Endothelial cell of umbilical vein (primary cell): ENCODE measurements at regions of chr4 and their contacts with region 1.

Region 1: GRCh38 chr4:53196882-53197771 is 168.7 kb downstream of the SCFD2 start:
- DNase-seq: peak; percentile 84
- H3K4me3 ChIP-seq: no peak overlapping the region
- H3K27ac ChIP-seq: no peak overlapping the region
- H3K4me1 ChIP-seq: no peaks in the 10 kb centered on the region
- H3K27me3 ChIP-seq: no peaks in the 10 kb centered on the region
- CTCF ChIP-seq: peak; percentile 46 to 49
- POLR2A ChIP-seq: no peak

Region 2: GRCh38 chr4:53101191-53101581 is 95.9 kb before region 1 on chr4:
- CTCF ChIA-PET with region 1: no interaction called
- POLR2A ChIA-PET with region 1: no interaction called
- dilution Hi-C with region 1: no loop called
- intact Hi-C with region 1: loop called (anchors 1 kb)
- DNase-seq: peak; percentile 90
- H3K4me3 ChIP-seq: peak overlapping the region in 1 of 3 experiments; percentile 39
- H3K27ac ChIP-seq: peak overlapping the region; percentile 98
- H3K4me1 ChIP-seq: peaks cover 58% of the 10 kb centered on the region
- H3K27me3 ChIP-seq: no peaks in the 10 kb centered on the region
- CTCF ChIP-seq: no peak
- POLR2A ChIP-seq: no peak

Region 3: GRCh38 chr4:53169695-53170617 is 27.2 kb before region 1 on chr4:
- CTCF ChIA-PET with region 1: no interaction called
- POLR2A ChIA-PET with region 1: no interaction called
- dilution Hi-C with region 1: no loop called
- intact Hi-C with region 1: no loop called
- DNase-seq: no peak
- H3K4me3 ChIP-seq: no peak overlapping the region
- H3K27ac ChIP-seq: no peak overlapping the region
- H3K4me1 ChIP-seq: no peaks in the 10 kb centered on the region
- H3K27me3 ChIP-seq: no peaks in the 10 kb centered on the region
- CTCF ChIP-seq: no peak
- POLR2A ChIP-seq: no peak

Region 4: DNA sequence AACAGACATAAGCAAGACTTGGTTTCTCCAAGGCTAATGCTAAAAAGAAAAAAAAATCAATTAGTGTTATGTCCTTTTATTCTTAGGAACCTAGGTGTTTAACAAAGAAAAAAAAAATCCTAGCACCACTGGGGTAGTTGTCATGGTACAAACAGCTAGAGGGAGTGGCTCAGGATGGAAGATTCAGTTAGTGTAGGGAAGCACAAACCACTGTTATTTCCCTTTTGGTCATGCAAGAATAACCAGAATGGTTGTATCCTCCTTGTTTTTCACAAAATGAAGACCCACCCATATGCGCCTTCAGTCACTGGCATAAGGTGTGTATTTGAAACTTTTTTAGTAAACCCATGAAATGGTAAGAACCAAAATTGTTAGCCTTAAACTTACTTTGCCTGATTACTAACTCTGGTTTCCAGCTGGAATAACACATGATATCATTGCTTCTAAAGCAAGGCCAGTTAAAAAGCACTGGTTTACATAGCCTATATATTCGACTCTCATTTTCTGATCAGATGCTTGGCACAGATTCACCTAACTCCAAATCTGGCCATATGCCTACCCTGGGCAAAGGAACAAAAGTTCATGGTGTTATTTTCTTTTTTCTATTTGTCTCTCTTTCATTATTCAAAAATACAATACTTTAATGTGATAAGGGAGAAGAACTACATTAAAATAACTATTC is 36.1 kb after region 1 on chr4:
- CTCF ChIA-PET with region 1: no interaction called
- POLR2A ChIA-PET with region 1: no interaction called
- dilution Hi-C with region 1: no loop called
- intact Hi-C with region 1: no loop called
- DNase-seq: no peak
- H3K4me3 ChIP-seq: no peak overlapping the region
- H3K27ac ChIP-seq: no peak overlapping the region
- H3K4me1 ChIP-seq: no peaks in the 10 kb centered on the region
- H3K27me3 ChIP-seq: no peaks in the 10 kb centered on the region
- CTCF ChIP-seq: no peak
- POLR2A ChIP-seq: no peak

Region 5: GRCh38 chr4:53432528-53433424 is 235.6 kb after region 1 on chr4:
- CTCF ChIA-PET with region 1: interaction called, 3 read pairs
- POLR2A ChIA-PET with region 1: no interaction called
- dilution Hi-C with region 1: no loop called
- intact Hi-C with region 1: loop called (anchors 10 kb)
- DNase-seq: no peak
- H3K4me3 ChIP-seq: no peak overlapping the region
- H3K27ac ChIP-seq: no peak overlapping the region
- H3K4me1 ChIP-seq: no peaks in the 10 kb centered on the region
- H3K27me3 ChIP-seq: no peaks in the 10 kb centered on the region
- CTCF ChIP-seq: no peak
- POLR2A ChIP-seq: no peak

Region 6: DNA sequence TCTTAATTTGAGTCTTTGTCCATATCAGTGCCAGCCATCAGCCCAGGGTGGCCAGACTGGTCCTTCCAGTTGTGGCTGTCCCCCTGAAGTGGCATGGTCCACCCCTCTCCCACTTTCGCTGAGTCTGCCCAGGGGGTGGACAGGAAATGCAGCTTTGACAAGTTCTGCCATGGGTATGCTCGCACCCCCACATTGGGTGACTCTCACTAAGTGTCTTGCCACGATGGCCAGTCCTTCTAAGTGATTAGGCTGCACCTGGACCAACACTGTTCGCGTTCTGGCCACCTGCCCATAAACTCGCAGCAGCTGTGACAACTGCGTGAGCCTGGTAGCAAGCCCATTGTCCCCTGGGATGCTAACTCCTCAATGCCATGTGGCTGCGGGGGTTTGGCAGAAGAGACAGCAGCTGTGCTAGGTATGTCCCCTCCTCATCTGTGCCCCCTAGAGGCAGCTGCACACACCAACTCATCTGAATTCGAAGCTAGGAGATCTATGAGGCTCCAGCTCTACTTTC is 404.2 kb after region 1 on chr4:
- CTCF ChIA-PET with region 1: interaction called, 7 read pairs
- POLR2A ChIA-PET with region 1: no interaction called
- dilution Hi-C with region 1: no loop called
- intact Hi-C with region 1: loop called (anchors 5 kb)
- DNase-seq: peak; percentile 22
- H3K4me3 ChIP-seq: no peak overlapping the region
- H3K27ac ChIP-seq: no peak overlapping the region
- H3K4me1 ChIP-seq: peaks cover 2% of the 10 kb centered on the region
- H3K27me3 ChIP-seq: no peaks in the 10 kb centered on the region
- CTCF ChIP-seq: peak; percentile 35 to 57
- POLR2A ChIP-seq: no peak

Region 7: GRCh38 chr4:53804719-53805118 is 607.6 kb after region 1 on chr4:
- CTCF ChIA-PET with region 1: interaction called, 5 read pairs
- POLR2A ChIA-PET with region 1: no interaction called
- dilution Hi-C with region 1: no loop called
- intact Hi-C with region 1: loop called (anchors 2 kb)
- DNase-seq: peak; percentile 11
- H3K4me3 ChIP-seq: no peak overlapping the region
- H3K27ac ChIP-seq: no peak overlapping the region
- H3K4me1 ChIP-seq: no peaks in the 10 kb centered on the region
- H3K27me3 ChIP-seq: peaks cover 4 to 17% of the 10 kb centered on the region in 2 experiments
- CTCF ChIP-seq: peak; percentile 30 to 33
- POLR2A ChIP-seq: no peak

Region 8: GRCh38 chr4:53914313-53915016 is 717.3 kb after region 1 on chr4:
- CTCF ChIA-PET with region 1: no interaction called
- POLR2A ChIA-PET with region 1: no interaction called
- dilution Hi-C with region 1: no loop called
- intact Hi-C with region 1: no loop called
- DNase-seq: peak; percentile 61
- H3K4me3 ChIP-seq: no peak overlapping the region
- H3K27ac ChIP-seq: peak overlapping the region; percentile 1
- H3K4me1 ChIP-seq: peaks cover 34% of the 10 kb centered on the region
- H3K27me3 ChIP-seq: no peaks in the 10 kb centered on the region
- CTCF ChIP-seq: no peak
- POLR2A ChIP-seq: no peak

Region 9: DNA sequence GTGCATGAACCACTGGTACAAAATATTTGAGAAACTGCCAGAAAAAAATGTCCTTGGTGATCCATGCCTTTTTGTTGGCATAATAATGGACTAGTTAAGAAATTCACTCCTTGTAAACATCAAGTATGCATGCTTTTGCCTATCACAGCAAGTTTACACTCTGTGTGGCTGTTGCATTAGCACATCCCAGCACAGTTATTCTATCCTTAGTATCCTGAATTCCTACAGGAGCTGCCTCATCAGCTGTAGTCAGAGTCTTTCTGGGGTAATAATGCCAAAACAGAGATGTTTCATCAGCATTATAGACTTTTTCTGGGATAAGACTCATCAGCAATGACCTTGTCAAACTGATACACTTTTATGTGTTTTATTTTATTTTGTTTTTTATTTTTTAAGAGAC is 784.4 kb after region 1 on chr4:
- CTCF ChIA-PET with region 1: no interaction called
- POLR2A ChIA-PET with region 1: no interaction called
- dilution Hi-C with region 1: no loop called
- intact Hi-C with region 1: loop called (anchors 5 kb)
- DNase-seq: no peak
- H3K4me3 ChIP-seq: no peak overlapping the region
- H3K27ac ChIP-seq: no peak overlapping the region
- H3K4me1 ChIP-seq: peaks cover 7% of the 10 kb centered on the region
- H3K27me3 ChIP-seq: no peaks in the 10 kb centered on the region
- CTCF ChIP-seq: no peak
- POLR2A ChIP-seq: no peak